Right ventricle myocardium inferior (tissue), 1 donor: ENCODE measurements at regions of chr2 and their contacts with region 1.

Region 1: GRCh38 chr2:55617175-55618024 is at the start of gene PPP4R3B:
- DNase-seq: peak; percentile 100
- ATAC-seq: peak; percentile 96
- total RNA-seq, gene PPP4R3B: 25.3 TPM

Region 2: GRCh38 chr2:55565613-55566012 is 51.8 kb before region 1 on chr2:
- intact Hi-C with region 1: no loop called
- DNase-seq: no peak
- ATAC-seq: no peak

Region 3: GRCh38 chr2:55693181-55694134 is 76.1 kb after region 1 on chr2 and contains the start of gene PNPT1:
- intact Hi-C with region 1: loop called (anchors 5 kb)
- DNase-seq: peak; percentile 96
- ATAC-seq: peak; percentile 100
- total RNA-seq, gene PNPT1: 20.8 TPM